AG04450 (cell line): ENCODE measurements at regions of chr12 and their contacts with region 1.

Region 1: DNA sequence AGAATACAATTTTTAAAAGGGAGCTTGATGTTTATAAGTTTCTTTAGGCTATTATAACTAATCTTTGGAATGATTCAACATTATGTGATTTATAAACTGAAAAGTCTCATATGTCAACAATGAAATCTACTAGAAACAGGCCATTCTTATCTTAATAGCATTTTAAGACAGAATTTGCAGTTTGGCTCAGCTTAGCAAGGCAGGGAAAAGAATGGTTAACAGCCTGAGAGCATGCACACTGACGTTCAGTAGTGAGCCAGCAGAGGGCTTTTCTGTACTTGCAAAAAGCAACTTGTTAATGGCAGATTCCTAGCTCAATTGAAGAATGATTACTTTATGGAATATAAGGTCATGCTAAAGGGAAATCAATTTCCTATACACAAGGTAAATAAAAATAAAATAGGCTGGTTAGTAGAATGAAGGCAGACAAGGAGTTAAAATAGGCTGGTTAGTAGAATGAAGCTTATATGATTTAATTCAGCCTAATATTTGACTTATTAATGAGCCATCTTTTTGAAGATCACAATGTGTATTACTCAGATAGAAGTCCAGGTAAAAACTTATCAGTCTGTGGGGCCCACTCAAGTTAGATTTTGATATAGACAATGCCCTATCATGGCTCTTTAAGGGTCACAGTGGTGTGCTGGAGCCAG is 95.9 kb downstream of the OTOGL start:
- DNase-seq: peak; percentile 61
- H3K4me3 ChIP-seq: no peak overlapping the region
- H3K27ac ChIP-seq: no peak overlapping the region
- H3K27me3 ChIP-seq: no peaks in the 10 kb centered on the region
- CTCF ChIP-seq: peak; percentile 85

Region 2: GRCh38 chr12:80107221-80107620 is 88.0 kb before region 1 on chr12:
- CTCF ChIA-PET with region 1: no interaction called
- POLR2A ChIA-PET with region 1: no interaction called
- DNase-seq: no peak
- H3K4me3 ChIP-seq: no peak overlapping the region
- H3K27ac ChIP-seq: no peak overlapping the region
- H3K27me3 ChIP-seq: no peaks in the 10 kb centered on the region
- CTCF ChIP-seq: no peak

Region 3: DNA sequence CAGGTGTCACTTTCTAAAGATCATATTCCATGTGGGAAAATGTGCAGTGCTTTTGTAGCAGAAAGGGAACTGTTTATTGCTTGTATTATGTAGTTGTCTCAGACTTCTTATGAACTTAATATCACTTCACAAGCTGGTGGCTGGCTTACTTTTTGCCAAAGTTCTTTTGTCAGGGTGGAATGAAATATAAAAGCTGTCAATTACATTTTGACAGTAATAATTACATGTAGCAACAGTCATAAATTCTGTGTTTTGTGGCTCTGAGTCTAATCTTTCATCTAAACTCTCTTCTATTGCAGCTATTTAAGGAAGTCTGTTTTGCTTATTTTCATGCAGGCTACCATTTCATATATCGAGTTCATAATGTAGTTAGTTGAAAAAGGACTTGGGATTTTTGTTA is 10.8 kb after region 1 on chr12:
- CTCF ChIA-PET with region 1: interaction called, 14 read pairs
- POLR2A ChIA-PET with region 1: no interaction called
- DNase-seq: no peak
- H3K4me3 ChIP-seq: no peak overlapping the region
- H3K27ac ChIP-seq: no peak overlapping the region
- H3K27me3 ChIP-seq: no peaks in the 10 kb centered on the region
- CTCF ChIP-seq: no peak

Region 4: DNA sequence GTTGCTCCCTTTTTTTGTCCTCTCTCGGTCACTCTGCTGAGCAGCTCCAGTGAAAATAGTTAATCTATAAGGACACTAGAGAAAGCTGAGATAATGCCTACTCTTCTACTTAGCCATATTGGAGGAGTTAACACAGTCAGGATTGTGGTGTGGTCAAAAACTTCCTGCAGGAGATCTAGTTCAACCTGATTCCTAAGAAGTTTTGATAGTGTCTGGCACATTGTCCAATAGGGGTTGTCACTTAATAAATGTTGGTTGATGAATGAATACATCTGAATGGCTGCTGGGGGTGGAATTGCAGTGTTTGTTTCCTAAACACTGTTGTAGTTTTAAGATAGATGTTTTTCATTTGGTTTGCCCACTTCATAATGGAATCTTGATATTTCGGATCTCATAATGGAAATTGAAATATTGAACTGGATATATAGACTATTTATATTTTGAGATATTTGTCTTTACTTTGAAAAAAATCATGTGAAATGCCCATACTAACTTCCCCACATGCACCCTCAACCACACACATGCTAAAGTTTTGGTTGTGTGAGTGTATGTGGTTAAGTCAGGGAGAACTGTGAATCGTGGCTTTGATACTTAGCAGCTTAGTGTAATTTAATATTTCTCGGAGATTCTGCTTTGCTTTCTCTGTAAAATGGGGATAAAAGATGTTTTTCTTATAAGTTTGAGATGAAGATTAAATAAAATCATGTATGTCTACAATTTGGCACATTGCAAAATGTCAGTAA is 66.0 kb after region 1 on chr12:
- CTCF ChIA-PET with region 1: interaction called, 20 read pairs
- POLR2A ChIA-PET with region 1: no interaction called
- DNase-seq: no peak
- H3K4me3 ChIP-seq: no peak overlapping the region
- H3K27ac ChIP-seq: no peak overlapping the region
- H3K27me3 ChIP-seq: no peaks in the 10 kb centered on the region
- CTCF ChIP-seq: no peak

Region 5: DNA sequence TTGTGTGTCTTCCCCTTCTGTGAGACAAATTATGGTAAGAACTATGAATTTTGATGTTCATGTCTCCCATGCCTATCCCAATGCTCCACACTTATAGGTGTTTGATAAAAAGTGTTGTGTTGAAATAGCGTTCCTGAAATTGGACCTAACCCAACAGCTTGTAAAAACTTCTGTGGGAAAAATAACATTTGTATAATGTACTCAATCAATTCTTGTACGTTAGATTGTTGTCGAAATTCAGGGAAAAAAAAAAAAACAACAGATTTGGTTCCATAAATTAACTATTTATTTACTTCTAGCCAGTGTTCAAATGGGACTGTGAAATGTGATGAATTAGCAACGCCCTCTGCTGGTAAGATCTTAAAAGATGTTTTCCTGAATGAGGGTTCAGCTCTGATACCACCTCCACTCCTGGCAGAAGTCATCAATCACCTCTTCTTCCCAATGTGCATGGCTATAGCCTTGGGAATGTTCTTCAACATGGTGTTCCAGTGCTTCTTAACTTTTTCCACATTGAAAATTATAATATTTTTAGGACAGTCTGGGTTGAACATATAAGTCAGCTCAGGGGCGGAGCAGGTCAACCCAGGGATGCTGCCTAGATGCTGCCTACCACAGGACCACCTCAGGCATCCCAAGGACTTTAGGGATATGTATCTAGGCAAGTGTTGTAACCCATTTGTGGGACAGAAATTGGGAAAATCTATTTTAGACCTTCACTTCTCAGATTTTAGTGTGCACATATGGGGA is 74.8 kb after region 1 on chr12:
- CTCF ChIA-PET with region 1: interaction called, 170 read pairs
- POLR2A ChIA-PET with region 1: no interaction called
- DNase-seq: peak; percentile 27
- H3K4me3 ChIP-seq: no peak overlapping the region
- H3K27ac ChIP-seq: no peak overlapping the region
- H3K27me3 ChIP-seq: no peaks in the 10 kb centered on the region
- CTCF ChIP-seq: peak; percentile 60

Region 6: DNA sequence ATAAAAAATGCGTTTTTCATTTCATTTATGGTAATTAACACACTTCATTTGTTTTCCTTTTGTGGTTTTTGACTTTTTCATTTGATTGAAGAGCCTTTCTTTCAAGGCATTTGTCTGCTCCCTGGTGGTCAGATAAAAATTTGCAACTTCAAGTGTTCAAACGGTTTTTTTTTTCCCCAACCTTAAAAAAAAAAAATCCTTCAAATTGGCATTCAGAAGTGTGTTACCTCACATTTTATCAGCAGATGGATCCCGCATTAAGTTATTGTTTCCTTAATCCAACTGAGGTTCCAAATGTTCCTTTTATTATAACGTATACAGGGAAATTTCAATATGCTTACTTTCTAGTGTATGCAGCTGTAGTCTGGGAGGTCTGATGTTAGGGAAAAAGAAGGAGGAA is 568.7 kb after region 1 on chr12:
- CTCF ChIA-PET with region 1: interaction called, 10 read pairs
- POLR2A ChIA-PET with region 1: no interaction called
- DNase-seq: no peak
- H3K4me3 ChIP-seq: no peak overlapping the region
- H3K27ac ChIP-seq: no peak overlapping the region
- H3K27me3 ChIP-seq: no peaks in the 10 kb centered on the region
- CTCF ChIP-seq: peak; percentile 70

Region 7: DNA sequence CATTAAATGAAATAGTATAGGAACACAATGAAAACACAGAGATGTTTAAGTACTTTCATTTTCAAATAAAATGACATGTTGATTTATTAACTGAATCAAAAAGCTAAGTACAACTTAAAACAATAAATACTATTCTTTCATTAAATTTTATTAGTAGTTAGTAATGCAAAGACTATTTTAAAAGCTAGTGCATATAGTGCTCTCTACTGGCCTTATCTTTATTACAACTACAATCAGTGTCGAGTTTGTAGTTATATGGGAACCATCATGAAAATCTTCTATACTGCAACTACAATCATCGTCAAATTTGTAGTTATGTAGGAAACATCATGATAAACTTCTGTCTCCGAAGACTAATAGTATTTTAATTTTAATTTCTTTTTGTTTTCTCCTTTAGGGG is 751.4 kb after region 1 on chr12:
- CTCF ChIA-PET with region 1: interaction called, 19 read pairs
- POLR2A ChIA-PET with region 1: no interaction called
- DNase-seq: no peak
- H3K4me3 ChIP-seq: no peak overlapping the region
- H3K27ac ChIP-seq: no peak overlapping the region
- H3K27me3 ChIP-seq: no peaks in the 10 kb centered on the region
- CTCF ChIP-seq: peak; percentile 55

Region 8: DNA sequence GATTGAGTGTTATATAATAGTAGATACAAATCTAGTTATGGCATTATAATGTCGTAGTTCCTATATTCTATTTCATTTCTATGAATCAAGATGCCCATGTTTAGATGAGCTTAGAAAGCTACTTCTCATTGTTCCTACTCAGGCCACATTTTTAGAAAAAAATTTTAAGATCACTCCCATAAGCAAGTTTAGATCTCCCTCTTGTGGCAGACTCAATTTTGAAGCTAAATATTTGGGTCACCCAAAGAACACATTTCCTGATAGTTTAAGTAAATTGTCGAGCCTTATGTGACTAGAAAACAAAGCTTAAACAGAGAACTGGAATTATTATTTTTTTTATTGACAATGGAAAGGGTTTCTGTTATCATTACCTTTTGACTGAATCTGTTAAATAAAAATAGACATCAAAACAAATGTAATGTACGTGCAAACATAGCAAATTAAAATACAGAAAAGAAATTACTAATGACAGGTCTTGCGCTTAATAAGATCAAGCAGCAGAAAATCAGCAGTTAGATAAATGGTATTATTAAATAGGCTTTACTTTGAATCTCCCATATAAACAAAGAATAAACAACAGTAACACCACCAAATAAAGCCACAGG is 1062.8 kb after region 1 on chr12:
- CTCF ChIA-PET with region 1: interaction called, 27 read pairs
- POLR2A ChIA-PET with region 1: no interaction called
- DNase-seq: peak; percentile 8
- H3K4me3 ChIP-seq: no peak overlapping the region
- H3K27ac ChIP-seq: no peak overlapping the region
- H3K27me3 ChIP-seq: no peaks in the 10 kb centered on the region
- CTCF ChIP-seq: peak; percentile 64